CD4-positive, alpha-beta T cell (primary cell): ENCODE measurements at regions of chr19 and their contacts with region 1.

Region 1: GRCh38 chr19:3505598-3506383 is at the start of gene FZR1:
- DNase-seq: peak; percentile 98 to 100 (median 100)
- ATAC-seq: peak; percentile 85
- H3K4me3 ChIP-seq: peak within 1 kb of the TSS; percentile 91
- H3K4me3 Mint-ChIP-seq: peak within 1 kb of the TSS; percentile 95
- H3K27ac ChIP-seq: peak within 1 kb of the TSS; percentile 85 to 96
- H3K27ac Mint-ChIP-seq: peak within 1 kb of the TSS; percentile 95
- H3K4me1 ChIP-seq: peaks cover 53% of the 10 kb centered on the region
- H3K4me1 Mint-ChIP-seq: peaks cover 48% of the 10 kb centered on the region
- H3K27me3 ChIP-seq: no peaks in the 10 kb centered on the region
- H3K27me3 Mint-ChIP-seq: no peaks in the 10 kb centered on the region
- CTCF ChIP-seq: no peak
- total RNA-seq, gene FZR1: 109 to 116 TPM

Region 2: GRCh38 chr19:3057306-3057714 is 448.5 kb before region 1 on chr19:
- CTCF ChIA-PET with region 1: no interaction called
- POLR2A ChIA-PET with region 1: no interaction called
- intact Hi-C with region 1: loop called (anchors 10 kb)
- DNase-seq: no peak
- ATAC-seq: no peak
- H3K4me3 ChIP-seq: no peak overlapping the region
- H3K4me3 Mint-ChIP-seq: peak overlapping the region; percentile 42
- H3K27ac ChIP-seq: peak overlapping the region in 1 of 2 donors; percentile 38
- H3K27ac Mint-ChIP-seq: peak overlapping the region; percentile 96
- H3K4me1 ChIP-seq: peaks cover 84% of the 10 kb centered on the region
- H3K4me1 Mint-ChIP-seq: peaks cover 61% of the 10 kb centered on the region
- H3K27me3 ChIP-seq: no peaks in the 10 kb centered on the region
- H3K27me3 Mint-ChIP-seq: no peaks in the 10 kb centered on the region
- CTCF ChIP-seq: no peak

Region 3: DNA sequence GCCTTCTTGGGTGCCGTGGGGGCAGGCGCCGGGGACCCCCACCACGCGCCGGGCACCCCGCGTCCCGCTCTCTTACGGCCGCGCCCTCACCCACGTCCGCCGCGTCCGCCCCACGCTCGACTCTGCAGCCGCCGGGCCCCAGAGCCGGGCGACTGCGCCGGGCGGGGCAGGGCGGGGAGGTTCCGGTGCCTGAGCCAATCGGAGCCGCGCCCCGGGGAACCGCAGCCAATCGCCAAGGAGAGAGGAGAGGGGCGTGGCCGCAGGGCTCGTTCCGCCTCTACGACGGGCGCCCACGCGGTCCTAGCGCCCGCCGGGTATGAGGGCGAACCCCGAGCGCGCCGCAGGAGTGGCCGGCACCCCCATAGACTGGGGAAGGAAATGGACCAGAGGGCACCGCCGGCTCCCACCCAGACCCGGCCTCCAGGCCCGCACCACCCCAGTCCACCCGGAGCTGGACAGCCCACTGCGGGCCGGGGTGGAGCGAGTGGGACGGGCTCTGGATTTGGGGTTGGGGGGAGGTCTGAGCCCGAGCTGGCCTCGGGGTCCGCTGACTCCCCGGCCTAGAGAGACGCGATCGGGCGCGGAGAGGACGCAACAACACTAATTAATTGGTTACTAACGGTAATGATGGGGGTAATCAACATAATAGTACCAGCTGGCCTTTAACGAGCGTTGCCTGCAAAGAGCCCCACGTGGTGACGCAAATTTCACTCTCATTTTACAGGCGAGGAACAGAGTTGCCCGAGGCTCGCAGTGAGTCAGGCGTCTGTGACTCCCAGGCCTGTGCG is 51.9 kb after region 1 on chr19 and contains the start of gene MFSD12:
- CTCF ChIA-PET with region 1: no interaction called
- POLR2A ChIA-PET with region 1: interaction called, 5 read pairs
- intact Hi-C with region 1: loop called in 1 of 2 experiments (anchors 1 kb)
- DNase-seq: peak; percentile 87 to 97 (median 94)
- ATAC-seq: peak; percentile 77
- H3K4me3 ChIP-seq: peak within 1 kb of the TSS; percentile 84
- H3K4me3 Mint-ChIP-seq: peak within 1 kb of the TSS; percentile 93
- H3K27ac ChIP-seq: peak within 1 kb of the TSS; percentile 45 to 71
- H3K27ac Mint-ChIP-seq: peak within 1 kb of the TSS; percentile 93
- H3K4me1 ChIP-seq: peaks cover 54% of the 10 kb centered on the region
- H3K4me1 Mint-ChIP-seq: peaks cover 33% of the 10 kb centered on the region
- H3K27me3 ChIP-seq: no peaks in the 10 kb centered on the region
- H3K27me3 Mint-ChIP-seq: no peaks in the 10 kb centered on the region
- CTCF ChIP-seq: no peak
- total RNA-seq, gene MFSD12: 62.5 to 65.0 TPM

Region 4: GRCh38 chr19:3626473-3627350 is 120.9 kb after region 1 on chr19 and contains the start of gene CACTIN:
- CTCF ChIA-PET with region 1: no interaction called
- POLR2A ChIA-PET with region 1: no interaction called
- intact Hi-C with region 1: loop called in 1 of 2 experiments (anchors 2 kb)
- DNase-seq: peak; percentile 97 to 99 (median 98)
- ATAC-seq: peak; percentile 97
- H3K4me3 ChIP-seq: peak within 1 kb of the TSS; percentile 85
- H3K4me3 Mint-ChIP-seq: peak within 1 kb of the TSS; percentile 92
- H3K27ac ChIP-seq: peak within 1 kb of the TSS; percentile 83 to 98
- H3K27ac Mint-ChIP-seq: peak within 1 kb of the TSS; percentile 94
- H3K4me1 ChIP-seq: peaks cover 35% of the 10 kb centered on the region
- H3K4me1 Mint-ChIP-seq: peaks cover 21% of the 10 kb centered on the region
- H3K27me3 ChIP-seq: no peaks in the 10 kb centered on the region
- H3K27me3 Mint-ChIP-seq: no peaks in the 10 kb centered on the region
- CTCF ChIP-seq: no peak
- total RNA-seq, gene CACTIN: 25.8 to 25.9 TPM